ENCODE measurements at regions of chr19 and their contacts with region 1.

Region 1: DNA sequence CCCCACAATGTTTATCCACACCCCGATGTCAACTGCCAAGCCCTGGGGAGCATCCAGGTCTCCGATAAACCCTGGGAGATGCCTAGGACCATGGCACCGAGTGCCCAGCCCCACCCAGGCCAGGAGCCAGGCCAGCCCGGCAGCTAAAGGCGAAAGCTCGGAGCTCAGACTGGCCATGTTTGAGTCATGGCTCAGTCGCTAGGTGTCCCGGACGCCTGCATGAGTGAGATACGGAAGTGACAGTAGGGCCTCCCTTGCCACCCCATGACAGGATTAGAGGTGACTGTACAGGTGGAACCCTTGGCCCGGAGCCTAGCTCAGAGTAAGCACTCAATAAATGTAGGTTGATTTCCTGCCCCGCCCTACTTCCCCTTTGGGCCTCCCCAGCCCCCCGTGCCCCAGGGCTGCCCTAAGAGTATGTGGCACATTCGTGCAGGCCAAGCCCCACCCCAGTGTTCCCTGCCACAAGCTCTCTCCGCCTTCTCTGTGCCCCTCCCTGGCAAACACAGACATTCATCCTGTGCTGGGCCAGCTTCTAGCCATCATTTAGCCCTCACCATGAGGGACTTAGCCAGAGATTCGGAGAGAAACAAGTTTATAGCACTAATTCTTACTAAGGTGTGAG is 5.8 kb upstream of the TPM4 start:
- DNase-seq: peak; percentile 96
- ATAC-seq: peak; percentile 96
- H3K4me3 Mint-ChIP-seq: no peak overlapping the region
- H3K27ac Mint-ChIP-seq: no peak overlapping the region
- H3K4me1 Mint-ChIP-seq: peaks cover 40% of the 10 kb centered on the region
- H3K27me3 Mint-ChIP-seq: no peaks in the 10 kb centered on the region
- CTCF ChIP-seq: no peak

Region 2: GRCh38 chr19:15971222-15971780 is 99.2 kb before region 1 on chr19:
- CTCF ChIA-PET with region 1: no interaction called
- POLR2A ChIA-PET with region 1: no interaction called
- intact Hi-C with region 1: no loop called
- DNase-seq: no peak
- ATAC-seq: no peak
- H3K4me3 Mint-ChIP-seq: no peak overlapping the region
- H3K27ac Mint-ChIP-seq: no peak overlapping the region
- H3K4me1 Mint-ChIP-seq: no peaks in the 10 kb centered on the region
- H3K27me3 Mint-ChIP-seq: peaks cover 20% of the 10 kb centered on the region
- CTCF ChIP-seq: peak; percentile 10

Region 3: DNA sequence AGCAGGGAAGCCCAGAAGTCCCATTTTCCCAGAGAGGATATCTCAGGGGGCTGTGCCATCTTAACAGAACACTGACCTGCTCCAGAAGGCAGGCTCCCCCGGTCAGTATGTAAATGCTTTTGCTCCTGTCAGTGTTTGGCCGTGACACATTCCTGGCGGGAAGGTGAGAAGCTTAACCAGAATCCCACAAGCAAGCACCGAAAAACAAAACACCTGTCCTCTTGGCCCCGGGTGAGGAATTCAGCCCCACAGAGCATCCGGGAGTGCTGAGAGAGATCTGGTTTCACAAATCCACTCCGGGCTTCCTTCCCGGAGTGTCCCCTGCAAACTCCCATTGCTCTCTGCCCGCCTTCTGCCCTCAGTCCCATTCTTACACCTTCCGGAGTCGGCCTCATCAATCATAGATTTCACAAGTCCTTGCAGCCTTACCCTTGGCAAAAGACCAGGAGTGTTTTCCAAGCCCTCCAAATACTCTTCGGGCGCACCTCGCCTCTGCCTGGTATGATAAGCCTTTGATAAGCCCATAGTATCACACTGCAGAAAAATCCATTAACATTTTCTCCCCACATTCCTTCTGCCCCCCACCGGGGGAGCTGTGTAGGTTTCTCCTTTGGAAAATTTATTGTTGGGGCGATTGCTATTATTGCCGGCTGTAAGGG is 18.0 kb after region 1 on chr19:
- CTCF ChIA-PET with region 1: interaction called, 20 read pairs
- POLR2A ChIA-PET with region 1: interaction called, 33 read pairs
- intact Hi-C with region 1: no loop called
- DNase-seq: no peak
- ATAC-seq: no peak
- H3K4me3 Mint-ChIP-seq: no peak overlapping the region
- H3K27ac Mint-ChIP-seq: no peak overlapping the region
- H3K4me1 Mint-ChIP-seq: peaks cover 32% of the 10 kb centered on the region
- H3K27me3 Mint-ChIP-seq: no peaks in the 10 kb centered on the region
- CTCF ChIP-seq: no peak

Region 4: GRCh38 chr19:16124953-16125352 is 54.5 kb after region 1 on chr19:
- CTCF ChIA-PET with region 1: no interaction called
- POLR2A ChIA-PET with region 1: no interaction called
- intact Hi-C with region 1: no loop called
- DNase-seq: no peak
- ATAC-seq: no peak
- H3K4me3 Mint-ChIP-seq: no peak overlapping the region
- H3K27ac Mint-ChIP-seq: no peak overlapping the region
- H3K4me1 Mint-ChIP-seq: peaks cover 2% of the 10 kb centered on the region
- H3K27me3 Mint-ChIP-seq: no peaks in the 10 kb centered on the region
- CTCF ChIP-seq: no peak

Measured in activated CD8-positive, alpha-beta T cell treated with anti-CD3 and anti-CD28 coated beads for 36 hours (primary cell).